ENCODE measurements at regions of chr20 and their contacts with region 1.

Region 1: DNA sequence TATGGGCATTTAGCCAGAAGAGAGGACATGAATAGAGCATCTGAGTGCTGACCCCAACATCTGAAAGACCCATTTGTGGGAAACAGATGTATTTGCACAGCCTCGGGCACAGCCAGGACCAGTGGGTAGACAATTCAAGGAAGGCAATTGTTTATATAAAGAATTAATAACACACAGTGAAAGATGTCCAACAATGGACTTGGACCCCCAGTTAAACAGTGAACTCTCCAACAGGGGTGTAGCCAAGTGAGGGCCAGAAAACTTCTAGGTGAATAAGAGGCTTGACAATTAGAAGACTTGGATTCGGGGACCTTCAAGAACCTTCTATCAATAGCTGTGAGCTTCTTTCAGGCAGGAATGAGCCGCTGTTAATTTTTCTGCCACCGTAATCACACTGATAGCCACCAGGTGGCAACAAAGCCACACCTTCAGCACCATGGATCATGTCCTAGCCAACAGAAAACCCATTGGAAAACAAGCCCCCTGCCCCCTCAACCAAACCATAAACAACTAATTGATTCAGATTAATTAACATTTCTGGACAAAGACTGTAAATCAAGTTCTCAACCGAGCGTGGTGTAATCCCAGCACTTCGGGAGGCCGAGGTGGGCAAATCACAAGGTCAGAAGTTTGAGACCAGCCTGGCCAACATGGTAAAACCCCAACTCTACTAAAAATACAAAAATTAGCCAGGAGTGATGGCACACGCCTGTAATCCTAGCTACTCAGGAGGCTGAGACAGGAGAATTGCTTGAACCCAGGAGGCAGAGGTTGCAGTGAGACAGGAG is 8.8 kb upstream of the SRSF6 start:
- DNase-seq: peak; percentile 24
- H3K4me3 Mint-ChIP-seq: no peak overlapping the region
- H3K27ac Mint-ChIP-seq: no peak overlapping the region
- H3K4me1 Mint-ChIP-seq: peaks cover 11% of the 10 kb centered on the region
- H3K27me3 Mint-ChIP-seq: peaks cover 23% of the 10 kb centered on the region

Region 2: DNA sequence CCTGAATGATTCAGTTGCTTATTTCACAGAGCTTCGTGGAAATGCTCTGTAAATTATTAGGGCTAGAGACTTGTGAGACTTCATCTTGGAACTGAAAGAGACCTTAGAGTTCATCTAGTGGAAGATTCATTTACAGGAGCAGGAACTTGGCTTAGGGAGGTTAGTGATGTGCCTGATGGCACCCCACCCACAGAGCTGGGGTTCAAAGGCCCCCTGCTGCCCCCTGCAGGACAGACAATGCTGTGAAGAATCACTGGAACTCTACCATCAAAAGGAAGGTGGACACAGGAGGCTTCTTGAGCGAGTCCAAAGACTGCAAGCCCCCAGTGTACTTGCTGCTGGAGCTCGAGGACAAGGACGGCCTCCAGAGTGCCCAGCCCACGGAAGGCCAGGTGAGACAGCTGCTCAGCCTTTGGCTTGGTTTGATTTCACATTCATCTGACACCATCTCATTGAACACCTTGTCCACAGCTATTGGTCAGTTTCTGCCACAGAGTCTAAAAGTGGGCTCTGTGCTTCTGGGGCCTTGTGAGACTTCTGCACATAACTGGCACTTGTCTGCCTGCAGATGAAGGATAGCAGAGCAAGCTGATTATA is 243.1 kb after region 1 on chr20:
- intact Hi-C with region 1: loop called (anchors 1 kb)
- DNase-seq: peak; percentile 41
- H3K4me3 Mint-ChIP-seq: no peak overlapping the region
- H3K27ac Mint-ChIP-seq: no peak overlapping the region
- H3K4me1 Mint-ChIP-seq: peaks cover 4% of the 10 kb centered on the region
- H3K27me3 Mint-ChIP-seq: no peaks in the 10 kb centered on the region

Region 3: DNA sequence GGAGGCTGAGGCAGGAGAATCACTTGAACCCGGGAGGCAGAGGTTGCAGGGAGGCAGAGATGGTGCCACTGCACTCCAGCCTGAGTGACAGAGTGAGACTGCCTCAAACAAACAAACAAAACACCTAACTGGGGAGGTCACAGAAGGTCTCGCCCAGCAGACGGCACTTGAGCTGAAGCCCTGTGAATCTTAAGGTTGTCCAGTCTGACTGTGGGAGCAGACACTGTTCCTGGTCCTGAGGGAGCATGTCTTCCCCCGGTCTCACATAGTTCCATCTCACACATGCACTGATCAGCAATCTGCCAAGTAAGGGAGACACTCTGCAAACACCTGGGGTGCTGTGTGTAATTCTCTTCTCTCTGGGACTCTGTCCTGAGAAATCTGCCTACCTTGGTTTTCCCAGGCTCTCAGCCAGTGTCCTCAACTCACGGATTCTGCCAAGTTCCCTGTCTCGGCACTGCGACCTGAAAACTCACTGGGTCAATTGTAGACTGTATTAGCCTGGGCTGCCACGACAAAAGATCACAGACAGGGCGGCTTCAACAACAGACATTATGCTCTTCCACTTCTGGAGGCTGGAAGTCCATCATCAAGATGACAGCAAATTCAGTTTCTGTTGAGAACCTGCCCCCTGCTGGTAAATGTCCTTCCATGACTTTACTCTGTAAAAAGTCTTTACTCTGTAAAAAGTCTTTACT is 643.8 kb after region 1 on chr20:
- intact Hi-C with region 1: loop called (anchors 5 kb)
- DNase-seq: no peak
- H3K4me3 Mint-ChIP-seq: no peak overlapping the region
- H3K27ac Mint-ChIP-seq: no peak overlapping the region
- H3K4me1 Mint-ChIP-seq: peaks cover 4% of the 10 kb centered on the region
- H3K27me3 Mint-ChIP-seq: peaks cover 11% of the 10 kb centered on the region

Measured in activated T-helper 2 cell treated with anti-CD3 and anti-CD28 coated beads, Interferon-gamma antibody, Interleukin-2, Interleukin-4, amounts not matched to agents 10 μg/mL and 5 μg/mL and 100 μg/mL, durations not matched to agents 14 hours and 24 hours and 36 hours (primary cell).